Naive thymus-derived CD4-positive, alpha-beta T cell (primary cell): ENCODE measurements at regions of chr14 and their contacts with region 1.

Region 1: DNA sequence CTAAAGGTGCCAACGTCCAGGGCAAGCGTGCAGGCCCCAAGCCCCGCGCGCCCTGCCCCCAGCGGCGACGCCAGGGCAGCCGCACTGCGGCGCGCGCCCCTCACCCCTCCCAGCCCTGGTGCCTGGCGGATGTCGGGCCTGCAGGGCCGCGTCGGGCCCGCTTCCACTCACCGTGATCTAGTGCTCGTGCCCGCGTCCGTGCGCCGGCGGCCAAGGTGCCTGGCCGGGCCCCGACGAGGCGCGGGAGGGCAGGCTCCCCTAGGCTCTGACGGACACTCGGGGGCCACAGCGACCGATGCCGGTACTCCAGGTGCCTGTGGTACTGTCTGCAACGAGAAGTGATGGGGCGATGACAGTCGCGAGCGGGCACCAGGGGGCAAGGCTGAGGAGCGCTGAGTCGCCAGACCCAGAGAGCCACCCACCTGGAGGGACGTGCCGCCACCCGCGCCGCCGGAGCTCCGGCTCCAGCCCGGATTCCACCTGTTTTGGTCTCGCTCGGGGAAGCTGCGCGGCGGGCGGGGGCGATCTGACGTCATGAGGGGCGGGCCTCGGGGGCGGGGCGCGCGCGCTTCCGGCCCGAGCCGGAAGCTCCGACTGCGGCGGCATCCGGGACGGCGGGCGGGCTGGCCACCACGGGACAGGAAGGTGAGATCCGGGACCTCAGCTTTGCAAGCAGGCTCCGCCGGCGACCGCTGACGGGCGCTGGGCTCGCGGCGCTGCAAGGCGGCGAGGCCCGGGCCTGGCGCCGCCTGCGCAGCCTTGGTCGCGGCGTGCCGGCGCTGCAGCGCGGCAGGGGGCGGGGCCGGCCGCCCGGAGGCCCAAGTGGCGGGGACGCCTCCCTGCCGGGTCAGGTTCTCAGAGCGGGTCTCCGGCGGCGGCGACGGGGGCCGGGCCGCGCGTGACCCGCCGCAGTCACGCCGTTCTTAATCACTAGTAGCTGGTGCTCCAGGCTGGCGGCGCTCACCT is at the starts of genes LYSET and MOAP1:
- DNase-seq: peak; percentile 78 to 91 (median 89)
- ATAC-seq: peak; percentile 90
- H3K4me3 ChIP-seq: peak within 1 kb of the TSS; percentile 95
- H3K4me3 Mint-ChIP-seq: peak within 1 kb of the TSS; percentile 90 to 98 (median 96)
- H3K27ac ChIP-seq: peak within 1 kb of the TSS; percentile 96
- H3K27ac Mint-ChIP-seq: peak within 1 kb of the TSS; percentile 91 to 98 (median 96)
- H3K4me1 ChIP-seq: peaks cover 9 to 23% of the 10 kb centered on the region in 2 donors
- H3K4me1 Mint-ChIP-seq: peaks cover 24 to 60% (median 42%) of the 10 kb centered on the region in 7 donors
- H3K27me3 ChIP-seq: no peaks in the 10 kb centered on the region
- H3K27me3 Mint-ChIP-seq: no peaks in the 10 kb centered on the region
- total RNA-seq, gene LYSET: 8.0 to 26.6 (median 12.4) TPM
- total RNA-seq, gene MOAP1: 20.5 to 102 (median 43.6) TPM

Region 2: GRCh38 chr14:92121670-92122350 is 1062.9 kb before region 1 on chr14 and contains the starts of genes CPSF2 and NDUFB1:
- CTCF ChIA-PET with region 1: no interaction called
- POLR2A ChIA-PET with region 1: no interaction called
- intact Hi-C with region 1: loop called in 1 of 2 experiments (anchors 10 kb)
- DNase-seq: peak; percentile 74 to 87 (median 85)
- ATAC-seq: peak; percentile 92
- H3K4me3 ChIP-seq: peak within 1 kb of the TSS; percentile 78
- H3K4me3 Mint-ChIP-seq: peak within 1 kb of the TSS; percentile 88 to 100 (median 99)
- H3K27ac ChIP-seq: peak within 1 kb of the TSS; percentile 92
- H3K27ac Mint-ChIP-seq: peak within 1 kb of the TSS; percentile 96 to 100 (median 100)
- H3K4me1 ChIP-seq: peaks cover 17 to 19% of the 10 kb centered on the region in 2 donors
- H3K4me1 Mint-ChIP-seq: peaks cover 27 to 72% (median 53%) of the 10 kb centered on the region in 7 donors
- H3K27me3 ChIP-seq: no peaks in the 10 kb centered on the region
- H3K27me3 Mint-ChIP-seq: no peaks in the 10 kb centered on the region
- total RNA-seq, gene CPSF2: 30.2 to 77.4 (median 60.4) TPM
- total RNA-seq, gene NDUFB1: 55.1 to 107 (median 89.7) TPM

Region 3: GRCh38 chr14:92938890-92939671 is 245.6 kb before region 1 on chr14:
- CTCF ChIA-PET with region 1: no interaction called
- POLR2A ChIA-PET with region 1: no interaction called
- intact Hi-C with region 1: no loop called
- DNase-seq: no peak
- ATAC-seq: no peak
- H3K4me3 ChIP-seq: no peak overlapping the region
- H3K4me3 Mint-ChIP-seq: no peak overlapping the region
- H3K27ac ChIP-seq: no peak overlapping the region
- H3K27ac Mint-ChIP-seq: no peak overlapping the region
- H3K4me1 ChIP-seq: no peaks in the 10 kb centered on the region
- H3K4me1 Mint-ChIP-seq: no peaks in the 10 kb centered on the region
- H3K27me3 ChIP-seq: no peaks in the 10 kb centered on the region
- H3K27me3 Mint-ChIP-seq: no peaks in the 10 kb centered on the region

Region 4: GRCh38 chr14:92951912-92952471 is 232.7 kb before region 1 on chr14:
- CTCF ChIA-PET with region 1: interaction called, 3 read pairs
- POLR2A ChIA-PET with region 1: no interaction called
- intact Hi-C with region 1: loop called in 1 of 2 experiments (anchors 2 kb)
- DNase-seq: peak; percentile 48 to 84 (median 74)
- ATAC-seq: peak; percentile 93
- H3K4me3 ChIP-seq: no peak overlapping the region
- H3K4me3 Mint-ChIP-seq: no peak overlapping the region
- H3K27ac ChIP-seq: no peak overlapping the region
- H3K27ac Mint-ChIP-seq: peak overlapping the region in 1 of 9 donors; percentile 26
- H3K4me1 ChIP-seq: no peaks in the 10 kb centered on the region
- H3K4me1 Mint-ChIP-seq: peaks cover 0 to 9% (median 5%) of the 10 kb centered on the region in 7 donors
- H3K27me3 ChIP-seq: no peaks in the 10 kb centered on the region
- H3K27me3 Mint-ChIP-seq: no peaks in the 10 kb centered on the region

Region 5: DNA sequence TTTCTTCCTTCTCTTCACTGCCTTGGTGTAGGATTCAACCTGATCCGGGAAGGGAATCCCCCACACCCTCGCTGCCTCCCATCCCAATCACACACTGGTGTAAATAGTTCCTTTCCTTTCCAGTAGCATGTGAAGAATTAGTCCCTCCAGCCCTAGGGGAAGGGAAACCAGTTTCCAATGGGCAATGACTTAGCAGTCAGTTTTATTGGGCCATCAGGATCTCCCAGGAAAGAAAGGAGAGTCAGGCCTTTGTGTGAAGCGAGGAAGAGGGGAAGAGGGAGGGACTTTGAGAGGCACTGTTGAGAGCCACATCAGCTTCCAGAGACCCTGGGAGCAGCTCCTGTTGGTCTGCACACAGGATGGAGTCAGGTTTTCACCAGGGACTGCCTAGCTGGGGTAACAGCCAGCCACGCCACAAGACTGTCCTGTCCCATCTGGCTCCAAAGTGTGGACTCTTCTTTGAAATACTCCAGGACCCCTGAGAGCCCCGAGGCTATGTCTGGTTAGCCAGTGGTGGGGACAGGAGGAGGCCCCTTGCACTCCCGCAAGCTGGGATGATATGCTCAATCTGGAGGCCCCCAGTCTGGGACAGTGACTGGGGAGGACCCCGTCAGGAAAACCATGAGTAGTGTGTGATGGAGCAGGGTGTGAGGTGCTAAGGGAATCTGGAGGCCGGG is 27.8 kb before region 1 on chr14:
- CTCF ChIA-PET with region 1: no interaction called
- POLR2A ChIA-PET with region 1: no interaction called
- intact Hi-C with region 1: no loop called
- DNase-seq: no peak
- ATAC-seq: no peak
- H3K4me3 ChIP-seq: no peak overlapping the region
- H3K4me3 Mint-ChIP-seq: no peak overlapping the region
- H3K27ac ChIP-seq: no peak overlapping the region
- H3K27ac Mint-ChIP-seq: peak overlapping the region in 1 of 9 donors; percentile 4
- H3K4me1 ChIP-seq: no peaks in the 10 kb centered on the region
- H3K4me1 Mint-ChIP-seq: no peaks in the 10 kb centered on the region
- H3K27me3 ChIP-seq: no peaks in the 10 kb centered on the region
- H3K27me3 Mint-ChIP-seq: no peaks in the 10 kb centered on the region

Region 6: DNA sequence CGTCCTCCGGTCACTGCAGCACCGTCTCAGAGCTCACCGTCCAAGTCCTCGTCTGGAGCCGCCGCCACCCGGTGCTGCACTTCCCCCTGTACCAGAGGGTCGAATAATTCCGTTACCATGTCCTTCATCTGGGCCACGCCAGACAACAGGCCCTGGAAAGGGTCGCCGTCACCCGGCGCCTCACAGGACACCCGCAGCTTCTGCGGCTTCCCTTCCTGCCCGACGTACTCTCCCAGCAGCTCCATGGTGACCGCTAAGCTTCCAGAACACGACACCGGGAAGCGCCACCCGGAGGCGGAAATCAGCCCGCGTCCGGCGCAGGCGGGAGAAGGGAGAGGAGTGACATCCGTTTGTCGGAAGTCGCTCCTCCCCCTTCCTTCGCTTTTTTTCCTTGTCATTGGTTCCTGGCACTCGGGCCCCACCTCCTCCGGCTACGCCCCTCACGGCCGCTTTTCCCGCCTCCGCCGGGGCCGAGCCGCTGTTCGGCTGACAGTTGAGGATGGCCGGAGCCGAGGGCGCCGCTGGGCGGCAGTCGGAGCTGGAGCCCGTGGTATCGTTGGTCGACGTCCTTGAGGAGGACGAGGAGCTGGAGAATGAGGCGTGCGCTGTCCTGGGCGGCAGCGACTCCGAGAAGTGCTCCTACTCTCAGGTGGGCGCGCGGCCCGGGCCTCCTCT is 22.3 kb after region 1 on chr14 and contains the starts of genes GON7 and UBR7:
- CTCF ChIA-PET with region 1: interaction called, 13 read pairs
- POLR2A ChIA-PET with region 1: interaction called, 69 read pairs
- intact Hi-C with region 1: loop called (anchors 1 kb)
- DNase-seq: peak; percentile 66 to 91 (median 83)
- ATAC-seq: peak; percentile 99
- H3K4me3 ChIP-seq: peak within 1 kb of the TSS; percentile 81
- H3K4me3 Mint-ChIP-seq: peak within 1 kb of the TSS; percentile 75 to 99 (median 94)
- H3K27ac ChIP-seq: peak within 1 kb of the TSS; percentile 87
- H3K27ac Mint-ChIP-seq: peak within 1 kb of the TSS; percentile 88 to 97 (median 93)
- H3K4me1 ChIP-seq: peaks cover 13 to 22% of the 10 kb centered on the region in 2 donors
- H3K4me1 Mint-ChIP-seq: peaks cover 22 to 65% (median 50%) of the 10 kb centered on the region in 7 donors
- H3K27me3 ChIP-seq: no peaks in the 10 kb centered on the region
- H3K27me3 Mint-ChIP-seq: no peaks in the 10 kb centered on the region
- total RNA-seq, gene GON7: 3.5 to 17.4 (median 8.3) TPM
- total RNA-seq, gene UBR7: 10.1 to 31.3 (median 13.5) TPM

Region 7: DNA sequence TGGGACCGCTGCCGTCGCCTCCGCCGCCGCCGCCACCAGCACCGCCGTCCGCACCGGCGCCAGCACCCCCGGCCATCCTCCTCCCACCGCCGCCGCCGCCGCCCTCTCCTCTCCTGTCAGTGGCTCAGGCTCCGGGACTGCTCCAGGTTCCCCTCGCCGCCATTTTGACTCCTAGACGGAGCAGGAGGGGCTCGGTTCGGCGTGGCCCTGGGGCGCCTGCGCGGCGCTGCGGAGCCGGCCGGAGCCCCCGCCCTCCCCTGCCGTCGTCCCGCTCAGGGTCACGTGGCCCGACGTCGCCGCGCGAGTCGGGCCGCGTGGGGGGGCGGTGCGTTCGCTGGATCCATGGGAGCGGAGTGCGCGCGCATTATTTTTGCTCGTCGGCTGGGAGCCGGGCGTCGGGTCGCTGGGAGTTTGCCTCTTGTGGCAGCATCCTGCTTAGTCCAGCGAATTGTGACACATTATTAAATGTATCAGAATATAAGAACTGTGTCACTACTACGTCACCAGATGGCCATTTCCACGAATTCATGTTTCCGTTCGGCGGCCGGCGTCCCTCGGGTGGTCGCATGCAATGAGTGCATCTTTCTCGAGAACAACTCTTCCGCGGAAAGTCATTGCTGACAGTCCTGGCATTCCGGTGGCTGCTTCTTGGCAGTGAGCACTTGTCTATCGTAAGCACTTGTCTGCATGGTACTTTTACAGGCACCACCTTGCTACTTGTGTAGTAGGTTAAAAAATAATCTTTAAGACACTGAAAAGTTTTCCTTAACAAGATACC is 148.4 kb after region 1 on chr14 and contains the start of gene BTBD7:
- CTCF ChIA-PET with region 1: no interaction called
- POLR2A ChIA-PET with region 1: no interaction called
- intact Hi-C with region 1: loop called (anchors 1 kb)
- DNase-seq: peak; percentile 91 to 95 (median 93)
- ATAC-seq: peak; percentile 96
- H3K4me3 ChIP-seq: peak within 1 kb of the TSS; percentile 86
- H3K4me3 Mint-ChIP-seq: peak within 1 kb of the TSS; percentile 90 to 96 (median 92)
- H3K27ac ChIP-seq: peak within 1 kb of the TSS; percentile 90
- H3K27ac Mint-ChIP-seq: peak within 1 kb of the TSS; percentile 87 to 98 (median 93)
- H3K4me1 ChIP-seq: peaks cover 19 to 21% of the 10 kb centered on the region in 2 donors
- H3K4me1 Mint-ChIP-seq: peaks cover 34 to 64% (median 54%) of the 10 kb centered on the region in 7 donors
- H3K27me3 ChIP-seq: no peaks in the 10 kb centered on the region
- H3K27me3 Mint-ChIP-seq: no peaks in the 10 kb centered on the region
- total RNA-seq, gene BTBD7: 18.5 to 31.7 (median 27.5) TPM